Left colon (tissue), 2 donors: ENCODE measurements at regions of chrX and their contacts with region 1.

Region 1: DNA sequence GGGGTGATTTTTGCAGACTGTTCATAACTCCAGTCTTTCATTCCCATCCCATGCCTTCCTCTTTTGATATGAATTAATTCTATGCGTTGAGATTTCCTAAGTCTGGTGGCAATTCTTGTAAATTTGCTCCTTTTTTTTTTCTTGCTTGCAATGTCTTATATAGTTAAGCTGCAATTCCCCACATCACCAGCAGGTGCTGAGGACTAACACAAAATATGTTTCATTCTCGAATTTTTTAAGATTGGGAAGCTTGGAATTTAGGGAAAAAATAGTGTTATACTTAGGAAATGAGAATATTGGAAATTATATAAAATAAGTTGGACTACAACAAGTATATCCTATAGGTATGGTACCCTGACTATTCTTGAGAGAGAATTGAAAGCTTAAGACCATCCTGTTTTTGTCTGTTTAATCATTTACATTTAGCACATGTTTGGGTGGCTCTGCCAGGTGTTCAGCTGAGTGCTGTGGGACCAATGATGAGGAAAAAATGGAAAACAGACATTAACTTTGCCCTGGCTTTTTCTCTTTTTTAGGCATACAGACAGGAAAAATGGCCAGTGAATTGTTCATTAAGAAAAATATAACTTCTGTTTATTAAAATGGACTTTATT is 30.2 kb downstream of the AFF2 start:
- DNase-seq: peak in 1 of 2 donors; percentile 7
- ATAC-seq: no peak

Region 2: DNA sequence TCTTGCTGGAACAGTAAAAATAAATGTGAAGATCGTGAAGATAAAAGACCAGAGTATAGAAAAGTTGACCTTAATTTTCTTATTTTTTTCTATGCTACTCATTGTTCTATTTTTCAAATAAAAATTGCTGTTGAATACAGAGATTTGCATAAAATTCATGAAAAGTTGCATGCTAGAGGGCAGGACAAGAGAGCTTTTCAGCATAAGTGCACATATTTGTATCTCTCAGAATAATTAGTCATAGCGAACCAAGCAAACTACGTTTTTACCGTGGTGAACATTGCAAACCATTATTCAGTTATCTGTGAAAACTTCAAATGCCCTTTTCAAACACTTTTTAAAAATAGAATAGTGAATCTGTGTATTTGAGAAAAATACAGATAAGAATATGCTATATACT is 56.5 kb before region 1 on chrX:
- intact Hi-C with region 1: loop called in 1 of 2 experiments (anchors 10 kb)
- DNase-seq: no peak
- ATAC-seq: no peak

Region 3: DNA sequence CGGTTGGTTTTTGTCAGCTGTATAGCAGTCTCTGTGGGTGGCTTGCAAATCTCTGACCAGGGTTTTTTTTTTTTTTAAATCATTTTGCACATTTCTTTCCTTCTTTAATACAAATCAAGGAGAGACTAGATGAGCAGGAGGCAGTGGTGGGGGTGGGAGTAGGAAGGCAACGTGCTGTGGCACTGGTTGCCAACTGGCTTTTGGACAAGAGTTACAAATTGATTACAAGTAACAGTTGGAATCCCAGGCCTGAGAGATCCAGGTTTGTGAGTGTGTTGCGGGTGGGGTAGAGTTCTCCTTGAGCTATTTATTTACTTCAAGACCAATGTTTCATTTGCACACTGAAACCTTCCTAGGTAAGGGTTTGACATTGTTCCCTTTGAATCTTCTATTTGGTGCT is 295.1 kb after region 1 on chrX:
- intact Hi-C with region 1: no loop called
- DNase-seq: no peak
- ATAC-seq: no peak